K562 (cell line): ENCODE measurements at regions of chr22 and their contacts with region 1.

Region 1: GRCh38 chr22:17562906-17563870 is at the start of gene SLC25A18:
- DNase-seq: peak; percentile 37 to 47 (median 44)
- ATAC-seq: peak; percentile 56
- H3K4me3 ChIP-seq: no peak within 1 kb of the TSS
- H3K27ac ChIP-seq: no peak within 1 kb of the TSS
- H3K4me1 ChIP-seq: 0 out of 5 replicates have a peak, but pooled peaks cover 0 to 4% of the 10 kb centered on the region in 2 experiments
- H3K27me3 ChIP-seq: peaks cover 38 to 44% of the 10 kb centered on the region in 2 experiments
- CTCF ChIP-seq: peak; percentile 11 to 32 (median 25); a peak in 2 of 6 replicates
- EP300 ChIP-seq: no peak
- POLR2A ChIP-seq: no peak
- RAD21 ChIP-seq: no peak
- polyA plus RNA-seq, gene SLC25A18: 0.04 TPM in 1 of 2 experiments, not detected in the other

Region 2: GRCh38 chr22:17638432-17639246 is 75.5 kb after region 1 on chr22 and contains the start of gene BCL2L13:
- CTCF ChIA-PET with region 1: no interaction called
- POLR2A ChIA-PET with region 1: no interaction called
- in situ Hi-C with region 1: no loop called
- intact Hi-C with region 1: loop called (anchors 2 kb)
- DNase-seq: peak; percentile 94 to 98 (median 95)
- ATAC-seq: peak; percentile 91
- H3K4me3 ChIP-seq: peak within 1 kb of the TSS; percentile 90
- H3K27ac ChIP-seq: peak within 1 kb of the TSS; percentile 99
- H3K4me1 ChIP-seq: peaks cover 24 to 25% of the 10 kb centered on the region in 2 experiments
- H3K27me3 ChIP-seq: no peaks in the 10 kb centered on the region
- CTCF ChIP-seq: no peak; a peak in 2 of 6 replicates
- EP300 ChIP-seq: peak; percentile 78
- POLR2A ChIP-seq: peak; percentile 99
- RAD21 ChIP-seq: peak in 1 of 2 experiments; percentile 17; a peak in 1 of 4 replicates
- polyA plus RNA-seq, gene BCL2L13: 43.6 to 60.8 TPM

Region 3: GRCh38 chr22:17665854-17666253 is 102.7 kb after region 1 on chr22:
- CTCF ChIA-PET with region 1: no interaction called
- POLR2A ChIA-PET with region 1: no interaction called
- in situ Hi-C with region 1: no loop called
- intact Hi-C with region 1: no loop called
- DNase-seq: no peak
- ATAC-seq: no peak
- H3K4me3 ChIP-seq: no peak overlapping the region
- H3K27ac ChIP-seq: no peak overlapping the region
- H3K4me1 ChIP-seq: no peaks in the 10 kb centered on the region; a peak in 1 of 5 replicates
- H3K27me3 ChIP-seq: no peaks in the 10 kb centered on the region
- CTCF ChIP-seq: no peak
- EP300 ChIP-seq: no peak
- POLR2A ChIP-seq: no peak
- RAD21 ChIP-seq: no peak

Region 4: DNA sequence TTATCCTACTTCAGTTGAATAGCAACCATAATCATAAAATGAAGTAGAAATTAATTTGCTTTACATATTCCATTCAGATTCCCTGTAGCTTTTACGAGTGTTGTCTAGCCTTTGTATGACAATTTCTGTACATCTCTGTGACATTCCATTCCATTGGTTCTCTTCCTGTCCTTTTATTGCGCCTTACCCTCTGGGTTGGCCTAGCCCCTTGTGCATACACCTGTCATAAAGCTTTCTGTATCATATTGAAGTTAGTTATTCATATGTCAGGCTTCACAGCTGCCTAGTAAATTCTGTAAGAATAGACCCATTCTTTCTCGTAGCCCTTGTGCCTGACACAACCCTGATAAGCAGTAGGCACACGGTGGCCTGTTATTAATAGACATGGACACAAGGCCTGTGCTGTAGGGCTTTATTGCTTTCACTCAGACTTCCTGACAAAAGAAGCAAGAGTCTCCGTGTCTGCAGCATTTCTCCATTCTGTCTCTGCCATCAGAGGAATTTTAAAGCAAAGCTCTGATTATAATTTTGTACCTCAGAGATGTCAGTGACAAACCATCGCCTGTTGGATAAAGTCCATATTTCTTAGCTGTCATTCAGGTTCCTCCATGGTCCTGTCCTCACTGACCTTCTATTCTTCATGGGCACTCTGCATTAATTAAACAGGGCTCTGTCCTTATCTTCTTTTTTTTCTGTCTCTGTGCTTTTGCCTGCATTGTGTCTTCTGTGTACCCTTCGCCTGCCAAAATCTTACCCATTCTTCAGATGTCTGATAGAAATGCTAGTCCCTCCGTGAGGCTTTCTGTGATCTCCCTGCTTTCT is 161.7 kb after region 1 on chr22:
- CTCF ChIA-PET with region 1: no interaction called
- POLR2A ChIA-PET with region 1: no interaction called
- in situ Hi-C with region 1: loop called (anchors 10 kb)
- intact Hi-C with region 1: loop called (anchors 5 kb)
- DNase-seq: peak in 1 of 4 experiments; percentile 30
- ATAC-seq: peak; percentile 23; the same call in 1 of the 3 replicates
- H3K4me3 ChIP-seq: no peak overlapping the region
- H3K27ac ChIP-seq: 0 out of 3 replicates have a peak overlapping the region, but pooled peaks have one; percentile 9
- H3K4me1 ChIP-seq: peaks cover 0 to 6% of the 10 kb centered on the region in 2 experiments; a peak in 1 of 5 replicates
- H3K27me3 ChIP-seq: no peaks in the 10 kb centered on the region
- CTCF ChIP-seq: no peak
- EP300 ChIP-seq: no peak
- POLR2A ChIP-seq: no peak
- RAD21 ChIP-seq: no peak

Region 5: GRCh38 chr22:17785185-17786184 is 222.3 kb after region 1 on chr22:
- CTCF ChIA-PET with region 1: interaction called, 5 read pairs
- POLR2A ChIA-PET with region 1: no interaction called
- in situ Hi-C with region 1: no loop called
- intact Hi-C with region 1: loop called (anchors 2 kb)
- DNase-seq: peak; percentile 85 to 91 (median 87)
- ATAC-seq: peak; percentile 82
- H3K4me3 ChIP-seq: no peak overlapping the region
- H3K27ac ChIP-seq: peak overlapping the region; percentile 77; the same call in 1 of the 3 replicates
- H3K4me1 ChIP-seq: peaks cover 33 to 68% of the 10 kb centered on the region in 2 experiments; a peak in 4 of 5 replicates
- H3K27me3 ChIP-seq: no peaks in the 10 kb centered on the region; a peak in 1 of 5 replicates
- CTCF ChIP-seq: peak; percentile 88 to 97 (median 92)
- EP300 ChIP-seq: no peak
- POLR2A ChIP-seq: no peak
- RAD21 ChIP-seq: peak; percentile 44 to 84

Region 6: GRCh38 chr22:17891481-17892167 is 328.4 kb after region 1 on chr22:
- CTCF ChIA-PET with region 1: interaction called, 3 read pairs
- POLR2A ChIA-PET with region 1: interaction called, 3 read pairs
- in situ Hi-C with region 1: no loop called
- intact Hi-C with region 1: loop called (anchors 1 kb)
- DNase-seq: peak; percentile 51 to 59 (median 55)
- ATAC-seq: peak; percentile 84
- H3K4me3 ChIP-seq: no peak overlapping the region
- H3K27ac ChIP-seq: no peak overlapping the region
- H3K4me1 ChIP-seq: no peaks in the 10 kb centered on the region
- H3K27me3 ChIP-seq: no peaks in the 10 kb centered on the region
- CTCF ChIP-seq: peak; percentile 67 to 78 (median 68)
- EP300 ChIP-seq: no peak
- POLR2A ChIP-seq: no peak
- RAD21 ChIP-seq: peak; percentile 26 to 73; a peak in 3 of 4 replicates